Heart right ventricle (tissue), 16 donors: ENCODE measurements at regions of chr19 and their contacts with region 1.

Region 1: DNA sequence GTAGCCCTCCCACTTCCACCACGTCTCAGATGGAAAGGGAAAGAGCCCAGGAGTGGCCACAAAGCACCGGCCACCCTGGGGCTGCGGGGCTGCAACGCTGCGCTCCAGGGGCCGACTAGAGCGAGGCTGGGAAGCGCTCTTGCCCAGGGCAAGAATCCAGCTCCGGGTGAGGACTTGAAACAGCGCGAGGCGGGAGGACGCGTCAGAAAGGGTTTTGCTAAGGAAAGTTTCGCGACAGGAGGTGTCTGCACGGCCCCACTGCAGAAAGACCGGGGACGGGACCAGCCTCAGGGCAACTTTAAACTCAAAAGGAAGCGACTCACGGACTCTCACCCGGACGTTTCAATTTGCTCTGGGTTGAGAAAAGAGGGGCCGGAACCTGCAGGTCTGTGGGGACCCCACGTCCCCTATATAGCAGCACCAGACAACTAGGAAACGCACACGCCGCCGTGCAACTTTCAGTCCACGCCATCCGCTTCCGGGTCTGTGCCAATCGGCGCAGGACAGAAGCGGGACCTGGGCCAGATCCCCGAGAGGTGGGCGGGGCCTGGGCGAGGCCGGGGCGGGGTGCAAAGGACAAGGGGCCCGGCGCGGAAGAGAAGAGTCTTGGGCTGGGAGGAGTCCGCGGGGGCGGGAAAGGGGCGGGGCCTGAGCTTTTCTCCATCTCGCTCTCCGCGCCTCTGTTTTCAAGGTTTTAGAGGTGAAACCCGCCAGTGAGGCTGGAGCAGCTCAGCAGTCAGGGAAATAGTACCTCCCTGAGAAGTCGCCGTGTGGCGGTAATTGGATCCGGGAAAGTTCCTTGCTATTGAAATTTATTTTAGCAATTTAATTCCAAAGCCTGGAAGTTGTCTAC is at the start of gene ZNF816:
- DNase-seq: peak; percentile 97 to 99
- ATAC-seq: peak; percentile 99 to 100 (median 100)
- H3K4me3 ChIP-seq: peak within 1 kb of the TSS; percentile 39 to 83 (median 72)
- H3K27ac ChIP-seq: peak within 1 kb of the TSS; percentile 20 to 95 (median 83)
- H3K4me1 ChIP-seq: peaks cover 0 to 22% (median 13%) of the 10 kb centered on the region in 9 donors
- H3K27me3 ChIP-seq: no peaks in the 10 kb centered on the region
- CTCF ChIP-seq: no peak
- total RNA-seq, gene ZNF816: 3.8 to 11.8 (median 5.6) TPM

Region 2: DNA sequence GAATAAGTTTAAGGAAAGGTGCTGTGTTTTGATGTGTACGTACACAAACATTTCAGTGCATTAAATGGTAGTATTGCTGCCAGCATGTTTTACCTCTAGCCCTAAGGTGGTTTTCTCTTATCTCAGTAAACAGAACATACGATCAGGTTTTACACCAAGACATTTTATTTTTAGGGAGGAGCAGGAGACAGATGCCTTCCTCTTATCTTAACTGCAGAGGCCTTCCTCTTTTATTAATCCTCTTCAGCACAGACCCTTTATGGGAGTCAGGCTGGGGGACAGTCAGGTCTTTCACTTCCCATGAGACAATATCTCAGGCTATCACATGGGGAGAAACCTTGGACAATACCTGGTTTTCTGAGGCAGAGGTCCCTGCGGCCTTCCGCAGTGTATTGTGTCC is 212.8 kb before region 1 on chr19:
- intact Hi-C with region 1: no loop called
- DNase-seq: no peak
- ATAC-seq: no peak
- H3K4me3 ChIP-seq: no peak overlapping the region
- H3K27ac ChIP-seq: no peak overlapping the region
- H3K4me1 ChIP-seq: peaks cover 0 to 4% (median 0%) of the 10 kb centered on the region in 9 donors
- H3K27me3 ChIP-seq: no peaks in the 10 kb centered on the region
- CTCF ChIP-seq: no peak

Region 3: GRCh38 chr19:52897144-52897935 is 65.3 kb before region 1 on chr19 and contains the start of gene ZNF320:
- intact Hi-C with region 1: loop called in 3 of 10 experiments (anchors 2 to 5 kb)
- DNase-seq: peak; percentile 97
- ATAC-seq: peak; percentile 100
- H3K4me3 ChIP-seq: peak within 1 kb of the TSS; percentile 42 to 93 (median 76)
- H3K27ac ChIP-seq: peak within 1 kb of the TSS; percentile 8 to 98 (median 92)
- H3K4me1 ChIP-seq: peaks cover 0 to 20% (median 16%) of the 10 kb centered on the region in 9 donors
- H3K27me3 ChIP-seq: no peaks in the 10 kb centered on the region
- CTCF ChIP-seq: peak in 1 of 9 donors; percentile 5
- total RNA-seq, gene ZNF320: 6.3 to 16.3 (median 7.6) TPM

Region 4: GRCh38 chr19:52942386-52943133 is 20.1 kb before region 1 on chr19:
- intact Hi-C with region 1: loop called in 2 of 10 experiments (anchors 1 to 2 kb)
- DNase-seq: peak; percentile 92 to 94
- ATAC-seq: peak; percentile 97 to 100 (median 98)
- H3K4me3 ChIP-seq: peak overlapping the region; percentile 40 to 91 (median 80)
- H3K27ac ChIP-seq: peak overlapping the region in 9 of 10 donors; percentile 72 to 91 (median 85)
- H3K4me1 ChIP-seq: peaks cover 0 to 27% (median 9%) of the 10 kb centered on the region in 9 donors
- H3K27me3 ChIP-seq: no peaks in the 10 kb centered on the region
- CTCF ChIP-seq: no peak

Region 5: GRCh38 chr19:52993323-52994178 is 30.9 kb after region 1 on chr19:
- intact Hi-C with region 1: loop called in 1 of 10 experiments (anchors 2 kb)
- DNase-seq: peak; percentile 76 to 83
- ATAC-seq: peak; percentile 92 to 97 (median 94)
- H3K4me3 ChIP-seq: peak overlapping the region; percentile 29 to 68 (median 56)
- H3K27ac ChIP-seq: peak overlapping the region in 9 of 10 donors; percentile 40 to 71 (median 55)
- H3K4me1 ChIP-seq: peaks cover 0 to 20% (median 8%) of the 10 kb centered on the region in 9 donors
- H3K27me3 ChIP-seq: no peaks in the 10 kb centered on the region
- CTCF ChIP-seq: peak; percentile 55 to 85 (median 79)

Region 6: GRCh38 chr19:53019684-53020083 is 57.1 kb after region 1 on chr19:
- intact Hi-C with region 1: no loop called
- DNase-seq: no peak
- ATAC-seq: no peak
- H3K4me3 ChIP-seq: no peak overlapping the region
- H3K27ac ChIP-seq: no peak overlapping the region
- H3K4me1 ChIP-seq: no peaks in the 10 kb centered on the region
- H3K27me3 ChIP-seq: peaks cover 0 to 11% (median 0%) of the 10 kb centered on the region in 7 donors
- CTCF ChIP-seq: no peak

Region 7: GRCh38 chr19:53196777-53197410 is 234.3 kb after region 1 on chr19:
- intact Hi-C with region 1: no loop called
- DNase-seq: peak; percentile 98 to 99
- ATAC-seq: peak; percentile 96 to 99 (median 98)
- H3K4me3 ChIP-seq: peak overlapping the region; percentile 64 to 98 (median 84)
- H3K27ac ChIP-seq: peak overlapping the region; percentile 70 to 93 (median 84)
- H3K4me1 ChIP-seq: peaks cover 3 to 31% (median 14%) of the 10 kb centered on the region in 9 donors
- H3K27me3 ChIP-seq: no peaks in the 10 kb centered on the region
- CTCF ChIP-seq: peak in 1 of 9 donors; percentile 14